AG04449 (cell line): ENCODE measurements at regions of chr1 and their contacts with region 1.

Region 1: GRCh38 chr1:25895365-25895993 is 10.7 kb downstream of the STMN1 start:
- DNase-seq: peak; percentile 51
- H3K4me3 ChIP-seq: no peak overlapping the region
- CTCF ChIP-seq: peak; percentile 99

Region 2: DNA sequence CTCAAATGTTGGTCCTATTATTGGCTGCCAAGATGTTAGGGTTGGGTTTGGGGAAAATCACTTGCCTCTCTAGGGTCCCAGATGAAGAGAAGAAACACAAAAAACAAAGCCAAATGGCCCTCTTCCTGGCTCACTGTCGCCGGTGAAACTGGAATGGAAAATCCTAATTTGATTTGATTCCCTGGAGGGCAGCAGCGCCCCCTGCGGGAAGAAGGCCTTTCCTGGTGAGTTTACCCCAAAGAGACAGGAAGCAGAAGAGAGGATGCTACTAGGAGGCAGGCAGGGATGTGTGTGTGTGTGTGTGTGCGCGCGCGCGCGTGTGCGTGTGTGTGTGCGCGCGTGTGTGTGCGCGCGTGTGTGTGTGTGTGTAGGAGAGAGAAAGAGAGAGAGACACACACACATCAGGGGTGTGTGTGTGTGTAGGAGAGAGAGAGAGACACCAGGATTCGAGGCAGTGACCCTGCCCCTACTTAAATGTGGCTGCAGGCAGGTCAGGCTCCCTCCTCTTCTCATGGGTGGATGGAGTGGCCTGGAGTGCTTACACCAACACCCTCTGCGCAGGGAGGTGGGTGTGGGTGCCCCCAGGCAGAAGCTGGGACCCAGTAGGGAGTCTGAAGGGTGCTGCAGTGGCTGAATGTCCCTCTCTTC is 98.5 kb before region 1 on chr1:
- CTCF ChIA-PET with region 1: no interaction called
- POLR2A ChIA-PET with region 1: no interaction called
- DNase-seq: no peak
- H3K4me3 ChIP-seq: no peak overlapping the region
- CTCF ChIP-seq: peak; percentile 87

Region 3: GRCh38 chr1:25880996-25881650 is 14.4 kb before region 1 on chr1:
- CTCF ChIA-PET with region 1: interaction called, 24 read pairs
- POLR2A ChIA-PET with region 1: interaction called, 12 read pairs
- DNase-seq: no peak
- H3K4me3 ChIP-seq: no peak overlapping the region
- CTCF ChIP-seq: no peak

Region 4: GRCh38 chr1:25922056-25922969 is 26.8 kb after region 1 on chr1:
- CTCF ChIA-PET with region 1: interaction called, 20 read pairs
- POLR2A ChIA-PET with region 1: interaction called, 3 read pairs
- DNase-seq: no peak
- H3K4me3 ChIP-seq: peak overlapping the region; percentile 59
- CTCF ChIP-seq: no peak

Region 5: GRCh38 chr1:25997828-25998761 is 102.6 kb after region 1 on chr1 and contains the start of gene PAFAH2:
- CTCF ChIA-PET with region 1: interaction called, 609 read pairs
- POLR2A ChIA-PET with region 1: interaction called, 14 read pairs
- DNase-seq: peak; percentile 95
- H3K4me3 ChIP-seq: peak within 1 kb of the TSS; percentile 67
- CTCF ChIP-seq: peak; percentile 98

Region 6: DNA sequence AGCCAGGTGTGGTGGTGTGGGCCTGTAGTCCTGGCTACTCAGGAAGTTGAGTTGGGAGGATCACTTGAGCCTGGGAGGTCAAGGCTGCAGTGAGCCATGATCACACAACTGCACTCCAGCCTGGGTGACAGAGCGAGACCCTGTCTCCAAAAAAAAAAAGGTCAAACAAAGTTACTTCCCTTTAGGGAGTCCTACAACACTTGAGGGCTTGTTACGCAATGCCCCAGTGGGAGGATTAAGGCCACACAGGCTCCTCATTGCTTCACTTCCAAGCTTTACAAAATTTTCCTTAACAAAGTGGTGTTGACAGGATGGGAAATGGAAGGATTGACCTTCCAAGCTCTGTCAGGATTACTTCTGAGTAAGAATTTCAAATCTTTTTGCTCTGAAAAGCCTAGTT is 119.9 kb after region 1 on chr1:
- CTCF ChIA-PET with region 1: interaction called, 43 read pairs
- POLR2A ChIA-PET with region 1: interaction called, 5 read pairs
- DNase-seq: no peak
- H3K4me3 ChIP-seq: no peak overlapping the region
- CTCF ChIP-seq: no peak

Region 7: DNA sequence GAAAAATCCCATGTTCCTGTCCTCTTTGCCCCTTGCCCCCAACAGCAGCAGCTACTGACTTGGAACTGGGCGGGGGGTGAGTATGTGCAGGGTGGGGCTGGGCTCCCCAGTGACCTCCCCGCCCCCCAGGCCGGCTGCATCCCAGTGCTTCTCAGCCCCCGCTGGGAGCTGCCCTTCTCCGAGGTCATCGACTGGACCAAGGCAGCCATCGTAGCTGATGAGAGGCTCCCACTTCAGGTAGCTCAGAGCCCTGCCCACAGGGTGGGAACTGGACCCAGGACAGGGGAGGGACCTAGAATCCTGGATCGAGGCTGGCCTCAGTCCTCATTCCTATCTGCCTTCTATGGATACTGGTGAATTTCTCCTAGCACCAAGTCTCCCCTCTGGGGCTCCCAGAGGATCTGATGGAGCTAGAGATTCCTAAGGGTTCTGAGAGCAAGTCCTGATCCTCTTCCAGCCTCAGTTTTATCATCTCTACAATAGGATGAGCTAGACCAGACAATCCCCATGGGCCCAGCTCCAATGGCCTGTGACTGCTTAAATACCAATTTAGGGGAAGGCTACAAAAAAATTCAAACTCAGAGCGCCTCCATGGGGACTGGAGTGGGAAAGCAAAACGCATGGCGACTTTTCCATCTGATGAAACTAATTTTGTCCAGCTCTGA is 134.1 kb after region 1 on chr1:
- CTCF ChIA-PET with region 1: interaction called, 70 read pairs
- POLR2A ChIA-PET with region 1: no interaction called
- DNase-seq: no peak
- H3K4me3 ChIP-seq: no peak overlapping the region
- CTCF ChIP-seq: no peak

Region 8: GRCh38 chr1:26145041-26145959 is 249.8 kb after region 1 on chr1:
- CTCF ChIA-PET with region 1: interaction called, 26 read pairs
- POLR2A ChIA-PET with region 1: no interaction called
- DNase-seq: no peak
- H3K4me3 ChIP-seq: no peak overlapping the region
- CTCF ChIP-seq: peak; percentile 76

Region 9: DNA sequence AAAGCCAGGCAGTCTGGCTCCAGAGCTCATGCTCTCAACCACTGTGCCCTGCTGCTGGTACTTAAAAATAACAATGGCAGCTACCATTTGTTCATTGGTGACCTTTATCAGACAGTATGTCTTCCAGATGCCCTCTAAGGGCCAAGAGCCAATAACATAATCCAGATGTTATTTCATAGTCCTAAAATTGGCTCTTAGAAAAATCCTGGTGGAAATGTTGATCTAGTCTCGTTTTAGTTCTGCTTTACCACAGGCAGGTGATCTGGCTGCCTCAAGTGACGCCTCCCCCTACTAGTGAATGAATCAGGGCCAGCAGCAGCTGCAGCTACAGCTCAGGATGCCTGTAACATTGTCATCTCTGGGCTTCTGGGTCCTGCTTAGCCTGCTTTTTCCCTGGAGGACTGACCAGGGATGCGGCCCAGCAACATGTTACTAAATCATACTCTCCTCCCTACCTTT is 564.1 kb after region 1 on chr1:
- CTCF ChIA-PET with region 1: no interaction called
- POLR2A ChIA-PET with region 1: no interaction called
- DNase-seq: no peak
- H3K4me3 ChIP-seq: no peak overlapping the region
- CTCF ChIP-seq: no peak